Mammary epithelial cell (primary cell): ENCODE measurements at regions of chr12 and their contacts with region 1.

Region 1: GRCh38 chr12:50257686-50258551 is 25.4 kb downstream of the LIMA1 start:
- DNase-seq: peak; percentile 32
- H3K4me3 ChIP-seq: no peak overlapping the region
- H3K27ac ChIP-seq: peak overlapping the region; percentile 43
- H3K4me1 ChIP-seq: peaks cover 60% of the 10 kb centered on the region
- H3K27me3 ChIP-seq: no peaks in the 10 kb centered on the region
- CTCF ChIP-seq: no peak

Region 2: DNA sequence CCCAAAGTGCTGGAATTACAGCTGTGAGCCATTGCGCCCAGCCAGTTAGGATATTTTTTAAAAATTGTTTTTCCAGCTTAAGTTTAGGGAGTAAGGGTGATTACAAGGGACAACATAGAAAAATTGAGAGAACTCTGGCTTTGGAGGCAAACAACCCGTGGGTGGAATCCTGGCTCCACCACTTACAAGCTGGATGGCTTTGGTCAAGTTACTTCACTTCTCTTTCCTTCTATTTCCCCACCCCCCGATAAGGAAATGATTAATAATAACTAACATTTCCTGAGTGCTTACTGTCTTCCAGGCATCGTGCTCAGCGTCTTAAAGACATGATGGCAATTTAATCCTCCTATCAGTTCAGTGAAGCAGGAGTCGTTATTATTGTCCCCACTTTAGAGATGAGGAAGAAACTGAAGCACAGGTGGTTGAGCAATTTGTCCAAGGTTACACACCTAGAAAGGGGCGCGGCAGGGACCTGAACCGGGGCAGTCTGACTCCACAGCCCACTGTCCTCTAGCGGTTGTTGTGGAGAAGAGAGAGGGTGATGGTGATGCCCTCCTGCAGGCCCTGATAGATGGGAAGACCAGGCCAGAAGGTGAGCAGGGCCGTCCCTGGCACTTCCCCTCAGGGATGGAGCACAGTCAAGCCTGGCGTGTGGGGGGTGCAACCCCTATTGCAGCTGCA is 337.5 kb before region 1 on chr12:
- CTCF ChIA-PET with region 1: no interaction called
- dilution Hi-C with region 1: no loop called
- in situ Hi-C with region 1: no loop called
- intact Hi-C with region 1: no loop called
- DNase-seq: no peak
- H3K4me3 ChIP-seq: no peak overlapping the region
- H3K27ac ChIP-seq: no peak overlapping the region
- H3K4me1 ChIP-seq: no peaks in the 10 kb centered on the region
- H3K27me3 ChIP-seq: no peaks in the 10 kb centered on the region
- CTCF ChIP-seq: no peak

Region 3: DNA sequence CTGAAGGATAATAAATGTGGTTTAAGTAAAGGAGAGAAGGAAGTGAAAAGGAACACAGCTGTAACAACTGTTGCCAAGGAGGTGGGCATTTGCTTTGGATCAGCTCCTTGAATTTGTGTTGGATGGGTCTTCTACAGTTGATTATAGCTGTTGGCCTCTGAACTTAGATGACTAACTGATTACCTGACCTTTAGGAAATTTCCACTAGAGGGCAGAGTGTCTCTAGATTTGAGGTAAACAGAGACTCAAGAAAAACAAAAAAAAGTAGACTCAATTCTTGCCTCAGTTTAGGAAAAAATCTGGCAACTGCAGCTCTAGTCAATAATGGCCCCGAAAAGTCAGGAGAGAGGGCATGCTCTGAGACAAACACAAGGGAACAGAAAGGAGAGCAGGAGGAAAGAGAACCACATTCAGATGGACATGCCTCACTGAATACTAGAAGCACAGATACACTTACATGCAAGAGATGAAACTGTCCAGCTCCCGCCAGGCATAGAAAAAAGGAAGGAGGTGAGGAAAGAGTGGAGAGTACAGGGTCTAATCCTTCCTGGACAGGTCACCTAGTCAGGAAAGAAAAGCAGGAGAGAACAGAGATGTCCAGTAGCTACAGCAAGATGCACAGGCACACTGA is 125.3 kb before region 1 on chr12:
- CTCF ChIA-PET with region 1: no interaction called
- dilution Hi-C with region 1: no loop called
- in situ Hi-C with region 1: no loop called
- intact Hi-C with region 1: no loop called
- DNase-seq: peak; percentile 29
- H3K4me3 ChIP-seq: no peak overlapping the region
- H3K27ac ChIP-seq: no peak overlapping the region
- H3K4me1 ChIP-seq: no peaks in the 10 kb centered on the region
- H3K27me3 ChIP-seq: no peaks in the 10 kb centered on the region
- CTCF ChIP-seq: peak; percentile 29 to 46

Region 4: DNA sequence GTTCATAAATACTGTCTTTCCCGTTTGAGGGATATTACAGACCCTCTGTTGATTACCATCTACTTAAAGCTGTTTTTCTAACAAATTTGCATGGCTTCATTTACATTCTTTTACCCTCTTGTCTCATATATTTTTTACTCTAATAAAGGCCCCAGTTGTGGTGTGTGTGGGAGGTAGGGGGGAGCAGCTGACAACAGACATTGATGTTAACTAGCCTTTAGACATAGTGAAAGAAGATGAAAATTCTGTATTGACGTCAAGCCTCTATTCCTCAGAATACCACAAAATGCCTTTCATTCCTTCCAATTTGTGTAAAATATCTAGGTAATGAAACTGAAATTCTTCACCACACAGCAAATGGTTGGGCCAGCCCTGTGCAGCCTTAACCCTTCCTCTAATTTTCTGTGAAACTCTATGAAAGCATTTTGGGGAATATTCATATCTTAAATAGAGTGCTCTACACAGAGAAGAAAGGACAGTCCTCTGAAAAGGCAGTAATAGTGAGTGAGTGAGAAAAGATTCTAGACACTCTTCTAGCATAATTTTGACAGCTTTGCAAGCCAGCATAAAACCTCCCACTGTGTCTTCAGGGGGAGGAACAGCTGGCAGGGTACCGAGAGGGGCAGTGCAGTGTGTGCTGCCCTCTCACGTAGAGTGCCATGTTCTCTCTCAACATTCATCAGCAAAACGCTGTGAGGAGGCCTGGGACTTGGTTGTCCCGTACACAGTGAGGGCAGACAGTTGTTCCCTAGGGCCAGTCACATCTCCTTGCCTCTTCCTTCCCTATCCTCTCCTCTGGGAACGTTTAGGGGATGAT is 70.6 kb before region 1 on chr12:
- CTCF ChIA-PET with region 1: no interaction called
- dilution Hi-C with region 1: loop called (anchors 5 kb)
- in situ Hi-C with region 1: no loop called
- intact Hi-C with region 1: no loop called
- DNase-seq: peak; percentile 26
- H3K4me3 ChIP-seq: no peak overlapping the region
- H3K27ac ChIP-seq: peak overlapping the region; percentile 62
- H3K4me1 ChIP-seq: peaks cover 45% of the 10 kb centered on the region
- H3K27me3 ChIP-seq: no peaks in the 10 kb centered on the region
- CTCF ChIP-seq: no peak

Region 5: GRCh38 chr12:50246873-50247612 is 10.9 kb before region 1 on chr12:
- CTCF ChIA-PET with region 1: interaction called, 12 read pairs
- dilution Hi-C with region 1: no loop called
- in situ Hi-C with region 1: no loop called
- intact Hi-C with region 1: no loop called
- DNase-seq: peak; percentile 99
- H3K4me3 ChIP-seq: no peak overlapping the region
- H3K27ac ChIP-seq: peak overlapping the region; percentile 99
- H3K4me1 ChIP-seq: peaks cover 32% of the 10 kb centered on the region
- H3K27me3 ChIP-seq: no peaks in the 10 kb centered on the region
- CTCF ChIP-seq: no peak

Region 6: DNA sequence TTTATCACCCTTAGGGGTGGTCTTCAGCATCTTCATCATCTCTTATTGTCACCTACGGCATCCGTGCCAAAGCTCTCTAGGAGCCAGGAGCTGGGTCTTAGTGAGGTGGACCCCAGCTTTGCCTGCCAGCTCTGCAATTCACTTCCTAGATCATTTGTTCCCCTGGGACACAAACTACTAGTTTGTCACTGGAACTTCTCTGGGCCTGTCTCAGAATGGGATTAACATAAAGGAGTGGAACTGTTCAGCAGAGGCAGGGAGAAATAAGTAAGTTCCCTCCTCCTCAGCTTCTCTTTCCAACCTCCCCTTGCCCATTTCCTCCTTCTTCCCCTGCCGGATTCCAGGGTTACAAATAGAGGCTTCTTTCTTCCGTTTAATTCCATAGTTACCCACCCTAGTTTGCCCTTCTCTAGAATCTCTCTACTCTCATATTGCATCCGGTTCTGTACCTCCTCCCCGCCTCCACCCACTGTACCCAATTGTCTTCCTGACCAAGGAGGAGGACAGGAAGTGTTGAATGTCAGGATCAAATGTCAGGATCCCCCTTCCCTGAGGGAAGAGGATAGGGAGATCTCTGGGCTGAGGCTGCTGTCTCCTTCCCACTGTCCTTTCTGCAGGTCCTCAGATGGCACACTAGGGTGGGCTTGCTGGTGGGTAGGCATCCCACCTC is 167.8 kb after region 1 on chr12:
- CTCF ChIA-PET with region 1: no interaction called
- dilution Hi-C with region 1: no loop called
- in situ Hi-C with region 1: no loop called
- intact Hi-C with region 1: loop called (anchors 10 kb)
- DNase-seq: no peak
- H3K4me3 ChIP-seq: no peak overlapping the region
- H3K27ac ChIP-seq: no peak overlapping the region
- H3K4me1 ChIP-seq: no peaks in the 10 kb centered on the region
- H3K27me3 ChIP-seq: no peaks in the 10 kb centered on the region
- CTCF ChIP-seq: no peak

Region 7: DNA sequence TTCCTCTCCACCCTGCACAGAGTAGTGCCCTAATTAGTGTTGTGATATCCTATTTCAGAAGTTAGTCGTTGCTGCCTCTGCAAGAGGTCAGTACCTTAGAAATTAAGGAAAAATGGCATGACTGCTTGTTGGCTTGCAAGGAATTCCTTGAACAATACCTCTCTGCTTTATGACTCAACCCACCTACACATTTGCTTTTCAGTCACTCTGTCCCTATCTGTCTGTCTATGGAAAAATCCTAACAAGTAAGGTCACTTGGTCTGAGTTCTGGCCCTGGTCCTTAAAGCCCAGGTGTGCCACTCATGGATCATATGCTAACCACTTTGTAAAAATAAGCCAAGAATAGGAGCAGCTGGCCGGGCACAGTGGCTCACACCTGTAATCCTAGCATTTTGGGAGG is 389.6 kb after region 1 on chr12:
- CTCF ChIA-PET with region 1: no interaction called
- dilution Hi-C with region 1: no loop called
- in situ Hi-C with region 1: no loop called
- intact Hi-C with region 1: no loop called
- DNase-seq: peak; percentile 70
- H3K4me3 ChIP-seq: no peak overlapping the region
- H3K27ac ChIP-seq: no peak overlapping the region
- H3K4me1 ChIP-seq: peaks cover 22% of the 10 kb centered on the region
- H3K27me3 ChIP-seq: no peaks in the 10 kb centered on the region
- CTCF ChIP-seq: no peak